Cardiac septum (tissue), 1 donor: ENCODE measurements at regions of chr17 and their contacts with region 1.

Region 1: GRCh38 chr17:35947156-35947585 is 3.7 kb upstream of the LYZL6 start:
- DNase-seq: no peak

Region 2: GRCh38 chr17:35879773-35880654 is 67.2 kb before region 1 on chr17 and contains the start of gene CCL5:
- intact Hi-C with region 1: loop called (anchors 10 kb)
- DNase-seq: no peak
- total RNA-seq, gene CCL5: 2.6 TPM

Region 3: GRCh38 chr17:35918665-35919064 is 28.5 kb before region 1 on chr17:
- intact Hi-C with region 1: no loop called
- DNase-seq: no peak